ENCODE measurements at regions of chr6 and their contacts with region 1.

Region 1: DNA sequence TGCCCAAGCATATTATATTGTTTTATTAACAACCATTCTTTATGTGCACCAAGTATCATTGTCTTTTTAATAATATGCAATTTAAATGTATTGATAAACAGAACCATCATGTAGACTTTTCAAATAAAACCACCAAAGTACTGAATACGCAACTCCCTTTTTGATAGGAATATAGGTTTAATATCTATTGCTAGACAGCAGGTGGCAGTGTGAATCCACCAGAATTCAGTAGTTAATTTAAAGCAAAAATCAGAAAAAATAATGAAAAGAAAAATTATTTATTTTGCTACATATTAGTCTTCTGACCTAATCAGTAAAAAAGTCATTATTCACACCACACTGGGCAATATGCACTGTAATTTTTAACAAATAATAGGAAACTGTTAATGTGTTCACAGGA is 143.7 kb downstream of the KLHL32 start:
- DNase-seq: no peak
- H3K4me3 ChIP-seq: no peak overlapping the region
- H3K27ac ChIP-seq: no peak overlapping the region
- H3K4me1 ChIP-seq: no peaks in the 10 kb centered on the region
- H3K27me3 ChIP-seq: no peaks in the 10 kb centered on the region
- CTCF ChIP-seq: peak in 9 of 11 experiments; percentile 9 to 56 (median 36)
- POLR2A ChIP-seq: no peak

Region 2: DNA sequence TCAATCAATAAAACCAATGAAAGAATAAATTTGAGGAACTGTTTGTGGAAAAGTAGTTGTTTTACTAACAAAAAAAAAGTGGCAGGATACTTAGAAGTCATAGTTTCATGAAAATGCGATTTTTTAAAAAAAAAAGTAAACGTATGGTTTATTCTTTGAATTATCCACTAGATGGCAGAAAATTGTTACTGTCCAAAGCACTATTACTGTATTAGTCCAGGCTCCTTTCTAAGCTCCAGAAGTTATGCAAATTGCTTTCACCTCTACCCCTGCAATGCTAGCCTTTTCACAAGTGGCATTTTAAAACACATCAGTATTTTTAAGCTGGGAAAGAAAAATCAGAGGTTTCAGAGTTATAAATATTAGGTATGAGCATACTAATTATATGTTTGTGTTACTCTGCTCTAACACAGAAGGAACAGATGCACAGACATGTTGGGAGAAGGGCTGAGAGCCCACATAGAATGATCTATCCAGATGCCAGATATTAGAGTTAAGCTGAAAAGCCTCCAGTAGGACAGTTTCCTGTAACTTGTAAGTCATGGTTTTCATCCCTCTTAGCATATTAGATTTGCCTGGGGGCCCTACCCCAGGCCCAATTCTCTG is 441.3 kb before region 1 on chr6:
- intact Hi-C with region 1: loop called (anchors 5 kb)
- DNase-seq: no peak
- H3K4me3 ChIP-seq: no peak overlapping the region
- H3K27ac ChIP-seq: no peak overlapping the region
- H3K4me1 ChIP-seq: peaks cover 0 to 4% (median 0%) of the 10 kb centered on the region in 6 donors
- H3K27me3 ChIP-seq: no peaks in the 10 kb centered on the region
- CTCF ChIP-seq: peak in 7 of 11 experiments; percentile 17 to 53 (median 31)
- POLR2A ChIP-seq: no peak

Region 3: GRCh38 chr6:96900873-96901272 is 167.3 kb before region 1 on chr6:
- intact Hi-C with region 1: loop called (anchors 5 kb)
- DNase-seq: no peak
- H3K4me3 ChIP-seq: no peak overlapping the region
- H3K27ac ChIP-seq: no peak overlapping the region
- H3K4me1 ChIP-seq: peaks cover 12 to 33% (median 29%) of the 10 kb centered on the region in 6 donors
- H3K27me3 ChIP-seq: no peaks in the 10 kb centered on the region
- CTCF ChIP-seq: no peak
- POLR2A ChIP-seq: no peak

Region 4: DNA sequence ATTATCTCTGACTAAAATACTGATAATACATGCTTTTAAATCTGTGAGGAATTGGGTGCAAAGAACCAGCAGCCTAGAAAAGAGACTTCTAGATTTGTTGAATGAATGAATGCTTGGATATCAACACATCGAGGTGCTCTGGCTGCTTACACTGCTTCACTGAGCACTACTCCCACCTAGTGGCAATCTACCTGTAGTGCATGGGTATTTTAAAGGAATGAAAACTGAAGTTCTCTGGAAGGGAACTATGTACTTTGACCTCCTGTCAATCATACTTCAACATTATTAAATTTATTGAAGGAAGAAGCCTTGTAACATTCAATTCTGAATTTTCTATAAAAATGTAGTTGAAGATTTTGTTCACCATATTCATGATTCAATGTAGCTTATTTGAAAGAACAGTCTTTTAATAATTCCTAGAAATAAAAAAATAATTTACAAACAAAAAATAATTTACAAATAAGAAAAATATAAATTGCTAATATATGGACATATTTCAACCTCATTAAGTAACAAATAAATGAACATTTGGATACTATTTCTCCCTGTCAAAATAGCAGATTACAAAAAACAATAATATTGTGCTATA is 326.0 kb after region 1 on chr6:
- intact Hi-C with region 1: loop called (anchors 5 kb)
- DNase-seq: no peak
- H3K4me3 ChIP-seq: no peak overlapping the region
- H3K27ac ChIP-seq: no peak overlapping the region
- H3K4me1 ChIP-seq: no peaks in the 10 kb centered on the region
- H3K27me3 ChIP-seq: no peaks in the 10 kb centered on the region
- CTCF ChIP-seq: peak; percentile 59 to 89 (median 79)
- POLR2A ChIP-seq: no peak